ENCODE measurements at regions of chr3 and their contacts with region 1.

Region 1: GRCh38 chr3:96059301-96059700 is 755.1 kb upstream of the EPHA6 start:
- DNase-seq: no peak
- ATAC-seq: no peak
- H3K4me3 ChIP-seq: no peak overlapping the region
- H3K27ac ChIP-seq: no peak overlapping the region
- H3K4me1 ChIP-seq: no peaks in the 10 kb centered on the region
- H3K27me3 ChIP-seq: no peaks in the 10 kb centered on the region
- CTCF ChIP-seq: no peak

Region 2: GRCh38 chr3:96657710-96658109 is 598.4 kb after region 1 on chr3:
- CTCF ChIA-PET with region 1: no interaction called
- POLR2A ChIA-PET with region 1: no interaction called
- in situ Hi-C with region 1: no loop called
- intact Hi-C with region 1: loop called (anchors 5 kb)
- DNase-seq: no peak
- ATAC-seq: no peak
- H3K4me3 ChIP-seq: no peak overlapping the region
- H3K27ac ChIP-seq: no peak overlapping the region
- H3K4me1 ChIP-seq: no peaks in the 10 kb centered on the region
- H3K27me3 ChIP-seq: no peaks in the 10 kb centered on the region
- CTCF ChIP-seq: no peak